ENCODE measurements at regions of chr17 and their contacts with region 1.

Region 1: DNA sequence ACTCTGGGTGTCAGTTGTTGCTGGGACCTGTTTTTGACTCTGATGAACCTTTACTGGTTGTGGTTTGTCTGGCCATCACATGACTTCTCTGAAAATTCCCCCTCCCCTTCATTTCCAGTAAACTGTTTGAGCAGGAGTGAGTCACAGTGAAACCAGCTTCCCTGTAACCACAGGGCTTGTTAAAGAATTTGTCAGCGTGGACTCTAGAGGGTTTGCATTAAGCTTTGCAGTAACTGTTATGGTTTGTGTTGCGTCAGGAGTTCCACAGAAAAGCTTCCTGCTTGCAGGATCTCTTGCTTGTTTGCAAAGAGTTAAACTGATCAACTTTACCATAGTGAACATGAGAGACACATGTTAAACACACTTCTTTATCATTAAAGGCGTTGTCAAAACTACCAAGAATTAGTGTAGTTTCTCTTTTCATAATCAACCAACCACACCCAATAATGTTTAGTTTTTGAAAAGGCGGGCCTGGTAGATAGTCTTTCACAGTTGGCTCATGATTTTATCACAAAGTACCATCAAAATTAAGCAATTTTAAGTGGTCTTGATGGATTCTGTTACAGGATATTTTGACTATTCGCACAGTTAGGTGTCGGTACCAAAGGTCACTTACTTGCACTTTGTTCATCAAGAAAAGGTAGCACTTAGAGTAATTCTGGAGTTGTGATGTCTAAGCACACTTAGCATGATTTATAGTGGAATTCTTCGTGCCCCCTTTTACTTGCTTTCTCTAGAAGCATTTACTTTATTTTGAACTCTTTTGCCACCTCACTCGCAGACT is 79.3 kb downstream of the VMP1 start:
- DNase-seq: peak; percentile 52 to 95
- ATAC-seq: peak; percentile 89 to 96 (median 94)
- H3K4me3 ChIP-seq: peak overlapping the region; percentile 28
- H3K4me3 Mint-ChIP-seq: peak overlapping the region; percentile 89
- H3K27ac ChIP-seq: peak overlapping the region; percentile 89
- H3K27ac Mint-ChIP-seq: peak overlapping the region; percentile 93 to 97
- H3K4me1 ChIP-seq: peaks cover 20% of the 10 kb centered on the region
- H3K4me1 Mint-ChIP-seq: peaks cover 28 to 29% of the 10 kb centered on the region in 2 donors
- H3K27me3 ChIP-seq: no peaks in the 10 kb centered on the region
- H3K27me3 Mint-ChIP-seq: no peaks in the 10 kb centered on the region
- CTCF ChIP-seq: no peak

Region 2: DNA sequence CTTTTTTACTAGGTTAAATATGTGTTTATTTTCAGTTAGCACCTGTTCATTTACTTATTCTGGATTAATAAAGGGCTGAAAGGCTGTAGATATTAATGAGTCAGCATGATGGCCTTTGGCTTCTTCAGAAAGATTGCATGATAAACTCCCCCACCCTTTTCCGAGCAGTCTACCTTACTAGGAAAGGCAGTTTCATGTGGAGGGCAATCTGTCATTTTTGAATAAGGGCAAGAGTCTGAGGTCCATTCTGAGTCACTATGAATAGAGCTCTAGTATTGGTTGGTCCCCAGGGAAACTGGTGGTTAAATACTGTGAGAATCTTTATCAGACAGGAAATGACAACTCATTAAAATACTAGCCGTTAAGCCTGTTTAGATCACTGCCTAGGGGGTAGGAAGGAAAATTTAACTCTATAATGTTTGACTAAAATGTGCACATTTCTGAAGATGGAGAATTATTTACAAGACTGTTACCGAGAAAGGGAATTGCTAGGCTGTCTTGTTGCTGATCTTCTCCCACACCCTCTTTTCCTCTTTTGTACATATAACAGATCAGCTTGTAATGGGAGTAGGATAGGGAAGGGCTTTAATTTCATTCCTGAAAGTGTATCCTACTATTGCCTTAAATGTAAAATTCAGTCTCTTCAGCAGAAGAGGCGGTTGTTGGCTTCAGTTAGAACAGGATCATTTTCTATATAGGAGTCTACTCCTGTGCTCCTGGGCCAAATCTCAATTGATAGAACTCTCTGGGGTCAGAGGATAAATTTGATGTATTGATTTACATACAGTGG is 42.7 kb after region 1 on chr17:
- intact Hi-C with region 1: loop called (anchors 1 kb)
- DNase-seq: peak in 1 of 2 donors; percentile 77
- ATAC-seq: peak; percentile 92 to 97 (median 96)
- H3K4me3 ChIP-seq: no peak overlapping the region
- H3K4me3 Mint-ChIP-seq: peak overlapping the region; percentile 81
- H3K27ac ChIP-seq: peak overlapping the region; percentile 71
- H3K27ac Mint-ChIP-seq: peak overlapping the region; percentile 91 to 97
- H3K4me1 ChIP-seq: peaks cover 21% of the 10 kb centered on the region
- H3K4me1 Mint-ChIP-seq: peaks cover 41 to 44% of the 10 kb centered on the region in 2 donors
- H3K27me3 ChIP-seq: no peaks in the 10 kb centered on the region
- H3K27me3 Mint-ChIP-seq: no peaks in the 10 kb centered on the region
- CTCF ChIP-seq: no peak

Region 3: DNA sequence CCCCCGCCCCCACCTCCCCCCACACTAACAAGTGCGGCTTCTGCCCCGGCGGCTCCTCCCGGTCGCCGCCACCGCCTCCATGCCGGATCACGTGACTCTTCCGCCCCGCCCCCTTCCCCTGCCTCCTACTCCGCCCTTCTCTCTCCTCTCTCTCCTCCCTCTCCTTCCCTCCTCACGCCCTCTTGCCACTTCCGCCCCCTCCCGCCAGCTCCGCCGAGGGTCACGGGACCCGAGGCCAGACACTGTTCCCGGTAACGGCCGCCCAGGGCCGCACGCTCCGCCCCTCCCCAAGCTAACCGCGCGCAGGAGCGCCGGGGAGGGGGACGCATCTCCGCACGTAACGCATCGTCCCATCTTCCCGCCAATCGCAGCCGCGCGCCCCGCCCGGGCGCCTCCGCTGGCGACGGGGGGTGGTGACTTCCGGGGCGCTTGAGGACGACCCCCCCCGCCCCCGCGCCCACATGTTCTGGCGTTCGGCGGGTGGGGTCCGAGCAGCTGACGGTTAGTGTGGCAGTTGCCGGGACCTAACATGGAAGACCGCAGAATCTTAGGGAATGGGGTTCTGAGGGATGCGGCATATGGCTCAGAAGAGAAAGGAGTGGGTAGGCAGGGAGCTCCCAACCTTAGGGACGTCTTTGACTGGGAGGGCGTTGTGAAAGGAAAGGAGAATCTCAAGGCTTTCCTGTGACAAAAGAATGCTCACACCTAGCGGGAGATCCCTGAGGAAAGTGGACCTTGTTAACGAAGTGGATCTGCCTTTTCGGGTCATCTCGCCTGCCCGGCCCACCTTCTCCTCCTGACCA is 605.5 kb after region 1 on chr17 and contains the start of gene USP32:
- intact Hi-C with region 1: loop called (anchors 10 kb)
- DNase-seq: peak; percentile 93 to 97
- ATAC-seq: peak; percentile 81 to 96 (median 86)
- H3K4me3 ChIP-seq: peak within 1 kb of the TSS; percentile 78
- H3K4me3 Mint-ChIP-seq: peak within 1 kb of the TSS; percentile 98
- H3K27ac ChIP-seq: peak within 1 kb of the TSS; percentile 88
- H3K27ac Mint-ChIP-seq: peak within 1 kb of the TSS; percentile 88 to 92
- H3K4me1 ChIP-seq: peaks cover 20% of the 10 kb centered on the region
- H3K4me1 Mint-ChIP-seq: peaks cover 41% of the 10 kb centered on the region in 2 donors
- H3K27me3 ChIP-seq: no peaks in the 10 kb centered on the region
- H3K27me3 Mint-ChIP-seq: no peaks in the 10 kb centered on the region
- CTCF ChIP-seq: peak; percentile 22
- total RNA-seq, gene USP32: 41.3 to 68.5 (median 41.7) TPM